Sciatic nerve (tissue), 2 donors: ENCODE measurements at regions of chr7 and their contacts with region 1.

Region 1: GRCh38 chr7:122217125-122217524 is 73.1 kb upstream of the AASS start:
- DNase-seq: no peak
- ATAC-seq: no peak

Region 2: DNA sequence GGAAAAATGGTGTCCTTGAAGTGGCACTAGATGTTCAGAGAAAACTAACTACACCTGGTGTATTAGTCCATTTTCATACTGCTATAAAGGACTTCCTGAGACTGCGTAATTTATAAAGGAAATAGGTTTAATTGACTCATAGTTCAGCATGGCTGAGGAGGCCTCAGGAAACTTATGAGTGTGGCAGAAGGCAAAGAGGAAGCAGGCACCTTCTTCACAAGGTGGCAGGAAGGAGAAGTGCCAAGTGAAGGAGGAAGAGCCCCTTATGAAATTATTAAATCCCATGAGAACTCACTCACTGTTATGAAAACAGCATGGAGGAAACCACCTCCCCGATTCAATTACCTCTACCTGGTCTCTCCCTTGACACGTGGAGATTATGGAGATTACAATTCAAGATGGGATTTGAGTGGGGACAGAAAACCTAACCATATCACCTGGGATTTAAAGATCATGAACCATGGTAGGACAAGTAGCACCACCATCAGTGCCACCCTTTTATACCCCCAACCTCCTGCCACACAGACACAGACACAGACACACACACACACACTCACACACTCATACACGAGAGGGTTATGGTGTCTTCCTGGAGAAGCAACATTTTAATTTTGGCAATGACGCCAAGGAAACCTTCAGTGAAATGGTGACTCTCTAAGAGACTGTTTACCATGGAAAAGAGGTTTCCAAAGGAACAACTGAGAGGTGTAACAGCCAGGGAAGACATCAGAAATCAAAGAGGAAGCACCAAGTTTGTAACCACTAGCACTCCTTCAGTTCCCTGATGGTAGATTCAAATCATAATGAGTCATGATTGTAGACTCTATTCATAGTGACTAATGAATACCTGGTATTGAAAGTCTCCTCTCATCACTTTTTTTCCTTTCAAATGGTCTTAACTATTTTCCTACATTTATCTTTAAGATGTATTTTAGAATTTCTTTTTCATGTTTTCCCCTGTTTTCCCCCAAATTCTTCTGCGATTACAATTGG is 930.1 kb before region 1 on chr7:
- intact Hi-C with region 1: no loop called
- DNase-seq: no peak
- ATAC-seq: no peak

Region 3: GRCh38 chr7:121936951-121937623 is 280.0 kb before region 1 on chr7:
- intact Hi-C with region 1: no loop called
- DNase-seq: no peak
- ATAC-seq: no peak

Region 4: GRCh38 chr7:122528879-122529481 is 311.9 kb after region 1 on chr7:
- intact Hi-C with region 1: loop called (anchors 2 kb)
- DNase-seq: no peak
- ATAC-seq: no peak